ENCODE measurements at regions of chr16 and their contacts with region 1.

Region 1: GRCh38 chr16:71961066-71962039 is 38.8 kb downstream of the PKD1L3 start:
- DNase-seq: peak; percentile 73
- CTCF ChIP-seq: peak; percentile 86

Region 2: GRCh38 chr16:71564155-71564967 is 397.0 kb before region 1 on chr16:
- CTCF ChIA-PET with region 1: interaction called, 11 read pairs
- POLR2A ChIA-PET with region 1: no interaction called
- DNase-seq: no peak
- CTCF ChIP-seq: no peak

Region 3: DNA sequence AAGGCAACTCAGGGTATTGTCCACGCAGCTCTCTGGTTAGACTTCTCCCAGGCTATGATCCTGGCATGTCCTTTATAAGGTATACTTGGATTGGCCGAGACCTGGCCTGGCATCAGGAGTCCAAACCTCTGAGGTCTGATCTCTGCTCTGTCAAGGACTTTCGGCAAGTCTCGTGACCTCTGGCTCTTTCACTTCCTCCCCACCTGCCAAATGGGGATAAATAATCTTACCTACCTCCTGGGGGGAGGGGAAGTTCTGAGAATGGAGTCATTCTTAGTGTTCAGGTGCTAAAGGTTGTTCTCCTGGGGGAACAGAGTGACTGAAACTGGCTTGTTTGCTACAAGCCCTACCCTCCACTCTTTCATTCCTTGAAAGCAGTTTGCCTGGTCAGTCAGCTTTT is 107.9 kb before region 1 on chr16:
- CTCF ChIA-PET with region 1: no interaction called
- POLR2A ChIA-PET with region 1: no interaction called
- DNase-seq: peak; percentile 59
- CTCF ChIP-seq: no peak

Region 4: DNA sequence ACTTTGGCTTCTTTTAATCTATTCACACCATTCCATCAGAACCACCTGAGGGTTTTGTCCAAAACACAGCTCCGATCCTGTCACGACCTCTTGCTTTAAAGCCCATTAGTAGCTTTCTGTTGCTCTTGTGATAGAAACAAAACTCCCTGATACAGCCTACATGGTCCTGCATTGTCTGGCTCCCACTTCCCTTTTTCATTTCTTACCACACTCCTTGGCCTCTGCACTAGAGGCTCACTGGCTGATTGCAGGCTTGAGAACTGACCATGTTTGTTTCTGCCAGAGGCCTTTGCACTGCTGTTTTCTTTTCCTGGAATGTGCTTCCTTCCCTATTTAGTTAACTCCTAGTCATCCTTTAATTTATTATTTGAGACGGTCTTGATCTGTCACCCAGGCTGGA is 42.3 kb before region 1 on chr16:
- CTCF ChIA-PET with region 1: interaction called, 10 read pairs
- POLR2A ChIA-PET with region 1: no interaction called
- DNase-seq: peak; percentile 55
- CTCF ChIP-seq: no peak

Region 5: GRCh38 chr16:71927383-71927782 is 34.0 kb before region 1 on chr16:
- CTCF ChIA-PET with region 1: interaction called, 10 read pairs
- POLR2A ChIA-PET with region 1: interaction called, 3 read pairs
- DNase-seq: no peak
- CTCF ChIP-seq: no peak

Region 6: GRCh38 chr16:71974068-71974818 is 12.9 kb after region 1 on chr16:
- CTCF ChIA-PET with region 1: interaction called, 27 read pairs
- POLR2A ChIA-PET with region 1: no interaction called
- DNase-seq: no peak
- CTCF ChIP-seq: no peak

Region 7: GRCh38 chr16:71979617-71980016 is 18.3 kb after region 1 on chr16:
- CTCF ChIA-PET with region 1: interaction called, 11 read pairs
- POLR2A ChIA-PET with region 1: no interaction called
- DNase-seq: no peak
- CTCF ChIP-seq: no peak

Region 8: DNA sequence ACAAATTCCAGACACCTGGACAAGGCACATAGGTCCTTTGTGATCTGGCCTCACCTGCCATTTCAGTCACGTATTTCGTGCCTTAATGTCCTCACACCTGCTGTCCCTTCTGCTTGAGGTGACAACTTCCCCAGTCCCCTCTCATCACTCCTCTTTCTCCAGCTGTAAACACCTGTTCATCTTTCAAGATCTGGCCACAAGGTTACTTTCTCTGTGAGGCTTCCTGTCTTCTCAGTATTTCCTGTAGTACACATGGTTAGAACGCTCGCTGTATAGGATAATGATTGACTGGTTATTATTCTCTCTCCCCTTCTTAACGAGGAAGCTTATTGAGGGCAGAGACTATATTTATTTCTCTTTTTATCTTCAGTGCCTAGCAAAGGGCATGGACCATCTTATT is 285.1 kb after region 1 on chr16:
- CTCF ChIA-PET with region 1: no interaction called
- POLR2A ChIA-PET with region 1: no interaction called
- DNase-seq: peak; percentile 18
- CTCF ChIP-seq: no peak

Measured in GM10248 (cell line).